Calu3 (cell line): ENCODE measurements at regions of chr13 and their contacts with region 1.

Region 1: GRCh38 chr13:46126552-46127357 is 21.9 kb upstream of the CPB2 start:
- DNase-seq: peak; percentile 61
- H3K4me3 Mint-ChIP-seq: no peak overlapping the region
- H3K27ac Mint-ChIP-seq: no peak overlapping the region
- H3K4me1 Mint-ChIP-seq: peaks cover 5% of the 10 kb centered on the region
- H3K27me3 Mint-ChIP-seq: no peaks in the 10 kb centered on the region
- CTCF ChIP-seq: peak; percentile 70

Region 2: GRCh38 chr13:46052319-46053161 is 74.2 kb before region 1 on chr13 and contains the start of gene ZC3H13:
- CTCF ChIA-PET with region 1: interaction called, 3 read pairs
- intact Hi-C with region 1: loop called (anchors 5 kb)
- DNase-seq: peak; percentile 86
- H3K4me3 Mint-ChIP-seq: peak within 1 kb of the TSS; percentile 82
- H3K27ac Mint-ChIP-seq: peak within 1 kb of the TSS; percentile 69
- H3K4me1 Mint-ChIP-seq: no peaks in the 10 kb centered on the region
- H3K27me3 Mint-ChIP-seq: no peaks in the 10 kb centered on the region
- CTCF ChIP-seq: peak; percentile 26
- total RNA-seq, gene ZC3H13: 28.5 and 31.7 TPM in 2 replicates